ENCODE measurements at regions of chr1 and their contacts with region 1.

Region 1: GRCh38 chr1:43008115-43009060 is 49.7 kb upstream of the SLC2A1 start:
- DNase-seq: peak; percentile 96 to 99
- H3K4me3 ChIP-seq: peak overlapping the region; percentile 19
- H3K4me3 Mint-ChIP-seq: peak overlapping the region; percentile 71
- H3K27ac Mint-ChIP-seq: peak overlapping the region; percentile 99
- H3K4me1 ChIP-seq: peaks cover 86% of the 10 kb centered on the region
- H3K4me1 Mint-ChIP-seq: peaks cover 33% of the 10 kb centered on the region
- H3K27me3 ChIP-seq: no peaks in the 10 kb centered on the region
- H3K27me3 Mint-ChIP-seq: no peaks in the 10 kb centered on the region
- CTCF ChIP-seq: peak in 1 of 2 experiments; percentile 29

Region 2: GRCh38 chr1:42877380-42877779 is 131.0 kb before region 1 on chr1:
- CTCF ChIA-PET with region 1: no interaction called
- POLR2A ChIA-PET with region 1: no interaction called
- intact Hi-C with region 1: no loop called
- DNase-seq: no peak
- H3K4me3 ChIP-seq: no peak overlapping the region
- H3K4me3 Mint-ChIP-seq: no peak overlapping the region
- H3K27ac Mint-ChIP-seq: no peak overlapping the region
- H3K4me1 ChIP-seq: no peaks in the 10 kb centered on the region
- H3K4me1 Mint-ChIP-seq: no peaks in the 10 kb centered on the region
- H3K27me3 ChIP-seq: no peaks in the 10 kb centered on the region
- H3K27me3 Mint-ChIP-seq: peaks cover 6% of the 10 kb centered on the region
- CTCF ChIP-seq: no peak

Region 3: DNA sequence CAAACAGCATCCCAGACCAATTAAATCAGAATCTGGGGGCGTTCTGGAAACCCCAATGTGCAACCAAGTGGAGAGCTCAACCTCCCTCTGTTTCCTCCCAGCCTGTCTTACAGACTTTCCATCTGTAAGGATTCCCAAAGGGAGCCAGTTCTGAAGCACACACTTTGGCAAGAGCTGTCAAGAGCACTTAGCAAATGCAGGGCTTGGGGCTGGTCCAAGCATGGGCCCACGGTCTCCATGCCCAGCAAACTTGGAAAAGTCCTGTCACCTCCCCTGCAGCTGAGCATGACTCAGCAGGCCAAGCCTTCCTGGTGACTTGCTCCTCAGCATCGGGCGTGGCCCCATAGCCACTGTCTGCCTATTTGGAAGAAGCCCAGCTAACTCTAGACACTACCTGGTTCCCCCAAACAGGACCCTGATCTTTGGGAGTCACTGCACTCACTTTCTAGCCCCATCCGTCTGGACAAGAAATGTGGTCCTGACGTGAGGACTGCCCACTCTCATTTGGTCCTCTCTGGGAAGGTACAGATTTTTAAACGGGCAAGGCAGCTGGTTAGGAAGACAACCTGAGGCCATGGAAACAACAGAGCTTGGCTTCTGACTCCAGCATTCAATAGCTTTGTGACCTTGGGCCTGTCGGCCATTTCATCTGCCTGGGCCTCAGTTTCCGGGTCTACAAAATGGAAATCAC is 66.6 kb before region 1 on chr1:
- CTCF ChIA-PET with region 1: no interaction called
- POLR2A ChIA-PET with region 1: no interaction called
- intact Hi-C with region 1: loop called (anchors 5 kb)
- DNase-seq: peak in 1 of 2 experiments; percentile 61
- H3K4me3 ChIP-seq: no peak overlapping the region
- H3K4me3 Mint-ChIP-seq: peak overlapping the region; percentile 65
- H3K27ac Mint-ChIP-seq: peak overlapping the region; percentile 93
- H3K4me1 ChIP-seq: peaks cover 95% of the 10 kb centered on the region
- H3K4me1 Mint-ChIP-seq: peaks cover 68% of the 10 kb centered on the region
- H3K27me3 ChIP-seq: no peaks in the 10 kb centered on the region
- H3K27me3 Mint-ChIP-seq: peaks cover 3% of the 10 kb centered on the region
- CTCF ChIP-seq: no peak

Region 4: GRCh38 chr1:42958488-42959319 is 49.7 kb before region 1 on chr1 and contains the start of gene SLC2A1:
- CTCF ChIA-PET with region 1: no interaction called
- POLR2A ChIA-PET with region 1: interaction called, 10 read pairs
- intact Hi-C with region 1: loop called (anchors 1 kb)
- DNase-seq: peak; percentile 94 to 96
- H3K4me3 ChIP-seq: peak within 1 kb of the TSS; percentile 95
- H3K4me3 Mint-ChIP-seq: peak within 1 kb of the TSS; percentile 93
- H3K27ac Mint-ChIP-seq: peak within 1 kb of the TSS; percentile 93
- H3K4me1 ChIP-seq: peaks cover 54% of the 10 kb centered on the region
- H3K4me1 Mint-ChIP-seq: peaks cover 41% of the 10 kb centered on the region
- H3K27me3 ChIP-seq: no peaks in the 10 kb centered on the region
- H3K27me3 Mint-ChIP-seq: no peaks in the 10 kb centered on the region
- CTCF ChIP-seq: no peak
- total RNA-seq, gene SLC2A1: 422 and 437 TPM in 2 replicates

Region 5: DNA sequence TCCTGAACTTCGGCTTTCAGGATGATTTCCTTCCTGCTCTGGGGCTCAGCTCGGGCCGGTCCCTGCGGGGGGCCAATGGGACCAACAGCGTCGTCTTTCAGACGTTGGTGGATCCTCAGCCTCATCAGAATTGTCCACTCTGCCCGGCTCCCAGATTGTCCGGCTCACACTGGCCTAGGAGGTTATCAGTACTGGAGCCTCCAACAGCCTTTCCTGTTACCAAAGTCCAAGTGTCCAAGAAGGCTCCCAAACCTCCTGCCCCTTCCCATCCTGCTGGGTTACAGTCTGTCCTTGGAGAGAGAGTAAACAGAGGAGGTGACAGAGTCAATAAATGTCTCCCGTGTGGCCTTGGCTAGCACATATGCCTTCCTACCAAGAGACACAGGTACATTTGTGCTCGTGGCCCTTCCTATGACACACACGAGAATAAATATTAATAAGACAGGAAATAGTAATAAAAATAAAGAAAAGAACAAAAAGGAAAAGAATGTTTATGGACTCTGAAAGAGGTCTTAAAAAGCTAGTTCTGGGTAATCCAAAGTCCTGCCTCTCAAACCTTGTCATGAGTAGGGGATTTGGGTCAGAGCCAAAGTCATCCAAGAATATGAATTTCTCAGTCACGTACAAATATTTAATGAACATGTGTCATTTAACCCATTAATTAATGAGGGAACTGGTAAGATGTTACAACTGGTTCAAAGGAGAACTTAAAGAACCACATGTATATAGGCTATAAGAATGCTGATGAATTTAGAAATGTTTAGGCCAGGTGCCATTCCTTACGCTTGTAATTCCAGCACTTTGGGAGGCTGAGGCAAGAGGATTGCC is 31.1 kb after region 1 on chr1:
- CTCF ChIA-PET with region 1: no interaction called
- POLR2A ChIA-PET with region 1: no interaction called
- intact Hi-C with region 1: loop called (anchors 2 kb)
- DNase-seq: peak; percentile 70 to 85
- H3K4me3 ChIP-seq: no peak overlapping the region
- H3K4me3 Mint-ChIP-seq: no peak overlapping the region
- H3K27ac Mint-ChIP-seq: peak overlapping the region; percentile 81
- H3K4me1 ChIP-seq: peaks cover 73% of the 10 kb centered on the region
- H3K4me1 Mint-ChIP-seq: peaks cover 33% of the 10 kb centered on the region
- H3K27me3 ChIP-seq: no peaks in the 10 kb centered on the region
- H3K27me3 Mint-ChIP-seq: no peaks in the 10 kb centered on the region
- CTCF ChIP-seq: no peak

Region 6: GRCh38 chr1:43082740-43083139 is 74.4 kb after region 1 on chr1:
- CTCF ChIA-PET with region 1: no interaction called
- POLR2A ChIA-PET with region 1: no interaction called
- intact Hi-C with region 1: no loop called
- DNase-seq: no peak
- H3K4me3 ChIP-seq: no peak overlapping the region
- H3K4me3 Mint-ChIP-seq: no peak overlapping the region
- H3K27ac Mint-ChIP-seq: no peak overlapping the region
- H3K4me1 ChIP-seq: no peaks in the 10 kb centered on the region
- H3K4me1 Mint-ChIP-seq: no peaks in the 10 kb centered on the region
- H3K27me3 ChIP-seq: no peaks in the 10 kb centered on the region
- H3K27me3 Mint-ChIP-seq: no peaks in the 10 kb centered on the region
- CTCF ChIP-seq: no peak